Right cardiac atrium (tissue), 5 donors: ENCODE measurements at regions of chr11 and their contacts with region 1.

Region 1: GRCh38 chr11:14544611-14545010 is 24.4 kb upstream of the PSMA1 start:
- DNase-seq: no peak
- ATAC-seq: no peak
- H3K4me3 ChIP-seq: no peak overlapping the region
- H3K27ac ChIP-seq: no peak overlapping the region
- H3K4me1 ChIP-seq: peaks cover 4% of the 10 kb centered on the region
- H3K27me3 ChIP-seq: no peaks in the 10 kb centered on the region

Region 2: GRCh38 chr11:14471127-14471526 is 73.5 kb before region 1 on chr11:
- intact Hi-C with region 1: no loop called
- DNase-seq: no peak
- ATAC-seq: no peak
- H3K4me3 ChIP-seq: no peak overlapping the region
- H3K27ac ChIP-seq: no peak overlapping the region
- H3K4me1 ChIP-seq: no peaks in the 10 kb centered on the region
- H3K27me3 ChIP-seq: no peaks in the 10 kb centered on the region

Region 3: DNA sequence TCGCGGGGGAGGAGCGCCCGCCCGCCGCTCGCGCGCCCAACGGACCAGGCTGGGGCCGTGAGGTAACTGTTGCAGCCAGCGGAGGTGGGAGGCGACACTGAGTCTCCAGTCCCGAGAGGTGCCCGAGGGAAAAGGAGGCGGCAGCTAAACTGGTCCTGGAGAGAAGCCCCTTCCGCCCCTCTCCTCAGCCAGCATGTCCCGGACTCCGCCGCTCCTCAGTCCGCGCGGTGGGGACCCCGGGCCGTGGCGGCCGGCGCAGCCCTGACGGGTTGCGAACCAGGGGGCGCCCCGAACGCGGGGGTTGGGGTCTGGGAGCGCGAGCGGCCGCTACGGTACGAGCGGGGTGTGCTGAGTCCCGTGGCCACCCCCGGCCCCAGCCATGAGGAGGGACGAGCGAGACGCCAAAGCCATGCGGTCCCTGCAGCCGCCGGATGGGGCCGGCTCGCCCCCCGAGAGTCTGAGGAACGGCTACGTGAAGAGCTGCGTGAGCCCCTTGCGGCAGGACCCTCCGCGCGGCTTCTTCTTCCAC is 99.2 kb after region 1 on chr11 and contains the start of gene PDE3B:
- intact Hi-C with region 1: loop called in 2 of 4 experiments (anchors 10 kb)
- DNase-seq: peak; percentile 88 to 94 (median 92)
- ATAC-seq: peak; percentile 97
- H3K4me3 ChIP-seq: peak within 1 kb of the TSS; percentile 69
- H3K27ac ChIP-seq: peak within 1 kb of the TSS; percentile 65
- H3K4me1 ChIP-seq: peaks cover 3% of the 10 kb centered on the region
- H3K27me3 ChIP-seq: no peaks in the 10 kb centered on the region
- total RNA-seq, gene PDE3B: 8.3 to 18.6 (median 9.4) TPM